T-cell (primary cell): ENCODE measurements at regions of chr15 and their contacts with region 1.

Region 1: GRCh38 chr15:74499366-74499765 is 38.4 kb upstream of the UBL7 start:
- DNase-seq: no peak
- ATAC-seq: no peak
- H3K4me3 ChIP-seq: no peak overlapping the region
- H3K4me3 Mint-ChIP-seq: no peak overlapping the region
- H3K27ac ChIP-seq: no peak overlapping the region
- H3K27ac Mint-ChIP-seq: no peak overlapping the region
- H3K4me1 ChIP-seq: no peaks in the 10 kb centered on the region
- H3K4me1 Mint-ChIP-seq: no peaks in the 10 kb centered on the region
- H3K27me3 ChIP-seq: no peaks in the 10 kb centered on the region
- H3K27me3 Mint-ChIP-seq: no peaks in the 10 kb centered on the region

Region 2: DNA sequence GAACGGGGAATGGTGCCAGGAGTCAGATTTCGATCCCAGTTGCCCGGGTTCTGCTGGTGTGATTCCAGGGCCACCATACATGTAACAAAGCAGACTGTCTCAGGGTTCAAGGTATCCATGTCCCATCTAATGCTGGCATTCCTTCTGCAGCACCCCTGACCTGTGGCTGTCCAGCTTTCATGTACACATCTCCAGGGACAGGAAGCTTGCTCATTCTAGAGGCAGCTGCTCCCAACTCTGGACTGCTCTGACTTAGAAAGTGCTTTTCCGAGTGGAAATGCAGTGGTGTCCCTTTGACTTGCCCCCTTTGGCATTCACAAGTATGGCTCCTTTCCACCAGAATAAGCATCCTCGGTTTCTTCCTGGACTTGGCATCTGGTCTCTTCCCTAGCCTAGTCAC is 473.9 kb before region 1 on chr15:
- CTCF ChIA-PET with region 1: no interaction called
- POLR2A ChIA-PET with region 1: interaction called in 1 of 2 experiments, 10 read pairs
- DNase-seq: no peak
- ATAC-seq: no peak
- H3K4me3 ChIP-seq: no peak overlapping the region
- H3K4me3 Mint-ChIP-seq: no peak overlapping the region
- H3K27ac ChIP-seq: no peak overlapping the region
- H3K27ac Mint-ChIP-seq: no peak overlapping the region
- H3K4me1 ChIP-seq: no peaks in the 10 kb centered on the region
- H3K4me1 Mint-ChIP-seq: peaks cover 6 to 10% (median 8%) of the 10 kb centered on the region in 3 donors
- H3K27me3 ChIP-seq: no peaks in the 10 kb centered on the region
- H3K27me3 Mint-ChIP-seq: no peaks in the 10 kb centered on the region